Natural killer cell (primary cell): ENCODE measurements at regions of chr15 and their contacts with region 1.

Region 1: GRCh38 chr15:100873029-100873677 is 6.5 kb upstream of the ALDH1A3 start:
- DNase-seq: peak in 1 of 2 donors; percentile 78
- ATAC-seq: peak; percentile 61 to 73 (median 68)
- H3K4me3 ChIP-seq: no peak overlapping the region
- H3K4me3 Mint-ChIP-seq: no peak overlapping the region
- H3K27ac ChIP-seq: no peak overlapping the region
- H3K27ac Mint-ChIP-seq: no peak overlapping the region
- H3K4me1 ChIP-seq: no peaks in the 10 kb centered on the region
- H3K4me1 Mint-ChIP-seq: no peaks in the 10 kb centered on the region
- H3K27me3 ChIP-seq: peaks cover 2% of the 10 kb centered on the region
- H3K27me3 Mint-ChIP-seq: peaks cover 18 to 34% of the 10 kb centered on the region in 2 donors
- CTCF ChIP-seq: peak; percentile 89

Region 2: GRCh38 chr15:100627789-100628395 is 245.3 kb before region 1 on chr15:
- intact Hi-C with region 1: loop called (anchors 1 kb)
- DNase-seq: peak; percentile 33 to 86
- ATAC-seq: peak; percentile 86 to 92 (median 86)
- H3K4me3 ChIP-seq: no peak overlapping the region
- H3K4me3 Mint-ChIP-seq: no peak overlapping the region
- H3K27ac ChIP-seq: no peak overlapping the region
- H3K27ac Mint-ChIP-seq: no peak overlapping the region
- H3K4me1 ChIP-seq: no peaks in the 10 kb centered on the region
- H3K4me1 Mint-ChIP-seq: peaks cover 19 to 27% of the 10 kb centered on the region in 2 donors
- H3K27me3 ChIP-seq: no peaks in the 10 kb centered on the region
- H3K27me3 Mint-ChIP-seq: no peaks in the 10 kb centered on the region
- CTCF ChIP-seq: peak; percentile 87